K562 (cell line): ENCODE measurements at regions of chr5 and their contacts with region 1.

Region 1: DNA sequence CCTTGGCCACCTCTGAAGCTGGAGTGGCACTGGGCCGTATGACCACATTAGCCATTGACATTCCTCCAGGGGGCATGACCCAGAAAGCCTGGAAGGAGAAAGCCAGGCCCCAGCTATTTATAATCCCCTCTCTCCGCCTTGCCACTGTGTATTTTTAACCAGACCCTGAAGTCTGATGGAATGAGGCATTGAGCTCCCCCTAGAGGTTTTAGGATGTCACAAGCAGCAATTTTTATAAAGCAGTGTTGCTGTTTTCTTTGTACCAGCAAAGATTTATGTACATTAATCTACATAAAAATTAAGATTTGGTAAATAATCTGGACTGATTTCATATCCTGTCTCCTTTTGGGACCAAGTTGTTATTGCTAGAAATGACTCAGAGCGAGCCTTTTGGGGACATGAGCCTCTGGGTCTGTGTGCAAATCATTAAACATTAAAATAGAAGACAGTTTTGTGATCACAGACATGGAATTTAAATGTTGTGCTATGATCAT is 127.1 kb downstream of the TRIO start:
- DNase-seq: peak; percentile 49 to 67 (median 58)
- ATAC-seq: peak; percentile 67
- H3K4me3 ChIP-seq: no peak overlapping the region
- H3K27ac ChIP-seq: no peak overlapping the region
- H3K4me1 ChIP-seq: peaks cover 13 to 32% of the 10 kb centered on the region in 2 experiments; a peak in 3 of 5 replicates
- H3K27me3 ChIP-seq: no peaks in the 10 kb centered on the region
- CTCF ChIP-seq: peak; percentile 66 to 84 (median 77)
- EP300 ChIP-seq: no peak
- POLR2A ChIP-seq: no peak
- RAD21 ChIP-seq: peak; percentile 46 to 67; a peak in 3 of 4 replicates

Region 2: DNA sequence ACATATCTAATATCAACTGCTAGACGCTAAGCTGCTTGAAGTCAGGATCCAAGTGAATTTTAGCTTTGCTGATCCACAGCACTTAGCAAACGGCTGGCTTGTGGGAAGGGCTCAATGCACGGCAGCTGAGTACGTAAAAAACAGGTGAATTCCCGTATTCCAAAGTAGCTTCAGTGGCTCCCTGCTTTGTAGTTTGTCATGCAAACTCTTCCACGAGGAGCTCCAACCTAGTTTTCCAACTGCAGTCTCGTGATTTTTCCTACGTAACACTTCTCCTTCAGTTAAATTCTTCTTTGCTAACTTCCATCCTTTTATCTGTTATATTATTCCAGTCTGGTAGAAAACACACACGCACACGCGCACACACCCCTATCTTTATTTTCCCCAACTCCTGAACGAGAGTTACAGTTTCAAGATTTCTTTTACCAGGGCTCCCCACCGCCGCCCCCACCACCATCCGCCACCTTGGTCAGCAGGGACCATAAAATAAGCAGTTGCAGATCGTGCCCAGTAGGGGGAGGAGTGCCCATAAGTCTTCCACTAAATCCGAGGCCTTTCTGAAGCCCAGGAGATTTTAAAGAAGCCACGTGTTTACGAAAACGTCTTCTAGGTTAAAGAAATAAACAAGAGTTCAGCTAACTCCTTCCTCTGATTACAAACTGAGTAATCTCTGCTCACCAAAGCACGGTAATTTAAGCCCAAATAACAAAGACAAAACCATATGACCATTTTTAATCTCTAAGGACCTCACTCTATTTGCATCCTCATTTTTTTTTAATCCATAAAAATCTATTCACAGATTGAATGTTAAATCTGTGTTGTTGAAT is 161.9 kb before region 1 on chr5:
- CTCF ChIA-PET with region 1: no interaction called
- POLR2A ChIA-PET with region 1: no interaction called
- in situ Hi-C with region 1: no loop called
- intact Hi-C with region 1: loop called (anchors 1 kb)
- DNase-seq: peak; percentile 68 to 81 (median 80)
- ATAC-seq: peak; percentile 97
- H3K4me3 ChIP-seq: no peak overlapping the region
- H3K27ac ChIP-seq: no peak overlapping the region
- H3K4me1 ChIP-seq: no peaks in the 10 kb centered on the region
- H3K27me3 ChIP-seq: peaks cover 0 to 6% of the 10 kb centered on the region in 2 experiments; a peak in 3 of 5 replicates
- CTCF ChIP-seq: peak; percentile 64 to 79 (median 73)
- EP300 ChIP-seq: no peak
- POLR2A ChIP-seq: no peak
- RAD21 ChIP-seq: peak; percentile 44 to 61